Colonic mucosa (tissue), 4 donors: ENCODE measurements at regions of chr1 and their contacts with region 1.

Region 1: DNA sequence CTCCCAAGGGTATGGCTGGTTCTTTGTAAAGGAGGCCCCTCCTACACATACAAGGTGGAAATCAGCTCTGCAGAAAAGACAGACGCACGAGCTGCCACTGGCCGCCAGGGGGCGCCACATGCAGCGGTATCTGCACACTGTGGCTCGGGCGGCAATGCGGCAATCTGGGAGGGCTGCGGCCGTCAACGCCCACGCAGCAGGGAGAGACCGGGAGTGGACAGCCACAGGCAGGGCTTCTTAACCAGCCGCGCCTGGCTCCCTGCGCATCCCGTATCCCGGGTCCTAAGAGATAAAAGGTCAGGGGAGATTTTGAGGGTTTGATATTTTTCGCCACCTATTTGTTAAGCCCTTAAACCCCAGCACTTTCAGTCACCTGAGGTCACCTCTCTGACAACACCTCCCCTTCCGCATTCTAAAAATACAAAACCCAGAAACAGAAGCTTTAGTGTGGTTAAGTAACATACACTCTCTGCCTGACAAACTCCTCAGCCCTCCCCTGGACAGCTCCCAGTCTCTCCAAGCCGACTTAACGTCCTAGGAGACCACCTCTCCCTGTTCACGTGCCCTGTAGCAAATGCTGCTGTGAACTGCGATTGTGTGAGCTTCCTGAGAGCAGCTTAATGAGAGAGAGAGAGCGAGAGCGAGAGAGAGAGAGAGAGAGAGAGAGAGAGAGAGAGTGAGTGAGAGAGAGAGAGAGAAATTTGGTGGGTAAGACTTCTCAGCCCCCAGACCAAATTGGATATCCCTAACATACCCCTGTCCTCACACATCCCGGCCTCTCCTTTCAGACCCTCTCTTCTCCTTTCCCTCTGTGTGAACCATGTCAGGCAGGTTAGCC is 13.5 kb upstream of the KCNA2 start:
- DNase-seq: peak; percentile 78
- H3K4me3 ChIP-seq: peak overlapping the region; percentile 12
- H3K27ac ChIP-seq: no peak overlapping the region
- H3K4me1 ChIP-seq: no peaks in the 10 kb centered on the region
- H3K27me3 ChIP-seq: no peaks in the 10 kb centered on the region
- CTCF ChIP-seq: peak; percentile 88

Region 2: DNA sequence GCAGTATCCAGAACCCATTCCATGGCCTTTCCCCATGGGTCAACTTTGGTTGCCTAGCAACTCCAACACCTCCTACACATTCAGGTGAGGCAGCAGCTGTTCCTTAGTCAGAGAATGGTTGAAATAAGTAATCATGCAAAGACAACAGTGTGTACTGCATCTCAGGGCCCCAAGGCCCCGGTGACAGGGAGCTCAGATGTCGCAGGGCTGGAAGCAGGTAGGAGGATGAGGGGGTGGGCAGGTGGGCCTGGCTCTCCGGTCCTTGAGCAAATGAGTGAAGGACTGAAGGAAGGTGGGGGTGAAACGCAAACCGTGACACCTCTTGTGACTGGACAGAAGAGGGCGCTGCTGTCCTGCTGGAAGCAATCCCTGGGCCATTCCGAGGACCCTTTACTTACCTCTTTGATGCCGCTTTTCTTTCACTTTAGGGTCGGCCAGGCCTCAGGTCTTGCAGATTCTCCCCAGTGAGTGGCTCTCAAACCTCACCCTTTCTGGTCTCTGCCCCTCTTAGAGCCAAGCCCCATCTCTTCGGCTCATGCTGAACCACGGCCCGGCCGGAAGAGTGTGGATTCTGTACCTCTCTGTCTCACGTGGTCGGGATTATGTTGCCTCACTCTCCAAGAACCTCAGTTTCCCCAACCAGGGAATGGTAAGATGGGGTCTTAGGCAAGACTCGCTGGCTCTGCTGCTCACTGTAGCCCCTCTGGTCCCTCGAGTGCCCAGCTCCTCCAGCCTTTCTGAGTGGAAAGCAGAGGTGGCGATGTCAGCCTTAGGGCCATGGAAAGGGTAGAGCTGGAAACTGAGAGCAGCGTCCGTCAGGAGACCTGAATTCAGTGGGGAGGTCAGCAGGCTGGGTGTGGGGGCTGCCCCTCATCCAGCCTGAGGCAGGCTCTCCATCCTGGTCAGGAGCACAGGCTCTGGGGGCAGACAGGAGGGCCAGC is 95.0 kb before region 1 on chr1:
- intact Hi-C with region 1: loop called (anchors 5 kb)
- DNase-seq: peak; percentile 24
- H3K4me3 ChIP-seq: no peak overlapping the region
- H3K27ac ChIP-seq: no peak overlapping the region
- H3K4me1 ChIP-seq: no peaks in the 10 kb centered on the region
- H3K27me3 ChIP-seq: no peaks in the 10 kb centered on the region
- CTCF ChIP-seq: peak; percentile 60

Region 3: GRCh38 chr1:110554871-110555801 is 64.5 kb before region 1 on chr1:
- intact Hi-C with region 1: loop called (anchors 5 kb)
- DNase-seq: peak; percentile 19
- H3K4me3 ChIP-seq: peak overlapping the region; percentile 16
- H3K27ac ChIP-seq: no peak overlapping the region
- H3K4me1 ChIP-seq: no peaks in the 10 kb centered on the region
- H3K27me3 ChIP-seq: peaks cover 12% of the 10 kb centered on the region
- CTCF ChIP-seq: peak; percentile 63

Region 4: DNA sequence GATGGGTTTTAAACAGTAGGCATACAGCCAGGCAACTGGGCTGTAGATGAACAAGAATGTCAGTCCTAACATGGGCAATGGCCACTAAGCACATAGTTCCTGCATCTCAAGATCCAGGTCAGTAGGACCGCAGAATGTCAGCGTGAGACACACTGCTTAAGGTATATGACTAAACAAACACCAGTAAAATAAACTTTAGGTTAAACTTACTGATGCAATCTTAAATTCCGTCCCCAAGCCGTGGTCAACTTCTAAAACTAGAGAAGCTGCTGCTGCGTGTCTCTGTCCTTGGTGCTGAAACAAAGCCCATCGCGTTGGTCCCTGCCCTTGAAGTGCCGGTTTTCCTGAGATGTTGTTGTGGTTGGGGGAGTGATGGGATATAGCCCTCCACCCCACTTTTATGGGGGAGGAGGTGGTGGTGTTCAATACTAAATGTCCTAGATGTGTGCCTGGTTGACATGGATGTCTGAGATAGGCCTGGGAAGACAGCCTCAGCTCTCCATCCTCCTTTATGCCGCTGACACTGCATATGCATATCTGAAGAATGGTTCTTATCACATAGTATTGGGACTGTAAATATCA is 127.0 kb after region 1 on chr1:
- intact Hi-C with region 1: no loop called
- DNase-seq: peak; percentile 31
- H3K4me3 ChIP-seq: no peak overlapping the region
- H3K27ac ChIP-seq: no peak overlapping the region
- H3K4me1 ChIP-seq: no peaks in the 10 kb centered on the region
- H3K27me3 ChIP-seq: no peaks in the 10 kb centered on the region
- CTCF ChIP-seq: no peak

Region 5: DNA sequence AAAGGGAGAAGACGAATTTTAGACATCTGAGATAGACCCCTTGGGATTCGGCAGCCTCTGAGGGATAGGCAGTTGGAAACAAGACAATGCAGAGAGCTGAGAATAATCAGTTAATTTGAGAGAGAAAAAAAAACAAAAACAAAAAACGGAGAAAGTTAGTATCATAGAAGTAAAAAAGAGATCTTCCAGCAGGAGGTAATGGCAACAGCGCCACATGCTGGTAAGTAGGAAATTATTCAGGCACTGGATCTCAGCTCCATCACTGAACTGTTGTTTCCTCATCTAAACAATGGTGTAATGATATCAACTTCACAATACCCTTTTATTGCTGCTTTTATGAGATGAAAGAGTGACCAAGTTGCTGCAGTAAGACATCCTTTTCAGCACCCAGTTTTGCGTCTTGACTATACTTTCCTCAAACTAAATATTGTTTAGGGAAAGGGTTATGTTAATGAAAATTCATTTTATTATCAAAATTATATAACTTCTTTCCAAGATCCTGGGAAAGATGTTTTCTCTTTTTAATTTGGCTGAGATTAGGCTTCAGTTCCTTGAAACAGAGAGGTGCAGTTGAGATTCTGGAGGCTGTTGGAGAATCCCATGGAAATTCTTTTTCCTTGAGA is 146.5 kb after region 1 on chr1:
- intact Hi-C with region 1: loop called (anchors 5 kb)
- DNase-seq: peak; percentile 20
- H3K4me3 ChIP-seq: no peak overlapping the region
- H3K27ac ChIP-seq: no peak overlapping the region
- H3K4me1 ChIP-seq: no peaks in the 10 kb centered on the region
- H3K27me3 ChIP-seq: no peaks in the 10 kb centered on the region
- CTCF ChIP-seq: peak; percentile 63

Region 6: DNA sequence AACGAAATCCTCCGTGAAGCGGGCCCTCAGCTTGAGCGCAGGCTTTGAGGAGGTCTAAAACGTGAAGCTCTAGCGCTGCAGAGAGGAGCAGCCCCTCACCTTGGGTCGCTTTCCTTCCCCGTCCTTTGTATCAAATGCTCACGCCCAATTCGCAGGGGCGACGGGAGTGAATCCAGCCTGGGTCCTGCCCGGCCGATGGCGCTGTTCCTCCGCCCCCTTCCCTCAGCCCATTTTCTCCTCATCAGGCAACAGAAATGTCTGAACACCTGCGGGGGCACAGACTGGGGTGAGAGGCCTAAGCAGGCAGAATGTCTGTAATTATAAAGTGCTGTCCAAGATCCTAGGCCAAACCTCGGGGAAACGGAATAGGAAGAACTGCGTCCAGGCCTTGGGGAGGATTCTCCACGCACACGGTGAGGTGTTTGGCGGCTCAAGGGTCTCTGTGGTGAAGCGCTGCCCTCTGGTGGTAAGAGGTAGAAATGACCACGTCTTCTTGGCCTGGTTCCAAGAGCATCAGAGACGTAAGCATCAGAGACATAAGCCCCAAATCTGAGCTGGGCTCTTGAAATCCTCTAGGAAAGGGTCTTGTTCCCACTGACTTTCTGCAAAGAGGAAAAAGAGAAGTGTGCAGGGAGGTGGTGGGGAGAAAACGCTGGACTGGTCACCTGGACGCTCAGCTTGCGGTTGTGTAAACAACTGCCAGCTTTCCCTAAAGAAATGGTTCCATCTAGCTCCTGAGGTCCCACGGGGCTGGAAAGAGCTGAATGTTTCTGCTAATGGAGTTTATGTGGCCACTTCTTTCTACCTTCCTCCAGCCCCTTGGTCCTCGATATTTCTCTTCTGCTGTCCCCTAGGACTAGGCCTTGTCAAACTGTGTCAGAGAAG is 161.2 kb after region 1 on chr1:
- intact Hi-C with region 1: loop called (anchors 5 kb)
- DNase-seq: peak; percentile 69
- H3K4me3 ChIP-seq: no peak overlapping the region
- H3K27ac ChIP-seq: no peak overlapping the region
- H3K4me1 ChIP-seq: no peaks in the 10 kb centered on the region
- H3K27me3 ChIP-seq: no peaks in the 10 kb centered on the region
- CTCF ChIP-seq: peak; percentile 60

Region 7: DNA sequence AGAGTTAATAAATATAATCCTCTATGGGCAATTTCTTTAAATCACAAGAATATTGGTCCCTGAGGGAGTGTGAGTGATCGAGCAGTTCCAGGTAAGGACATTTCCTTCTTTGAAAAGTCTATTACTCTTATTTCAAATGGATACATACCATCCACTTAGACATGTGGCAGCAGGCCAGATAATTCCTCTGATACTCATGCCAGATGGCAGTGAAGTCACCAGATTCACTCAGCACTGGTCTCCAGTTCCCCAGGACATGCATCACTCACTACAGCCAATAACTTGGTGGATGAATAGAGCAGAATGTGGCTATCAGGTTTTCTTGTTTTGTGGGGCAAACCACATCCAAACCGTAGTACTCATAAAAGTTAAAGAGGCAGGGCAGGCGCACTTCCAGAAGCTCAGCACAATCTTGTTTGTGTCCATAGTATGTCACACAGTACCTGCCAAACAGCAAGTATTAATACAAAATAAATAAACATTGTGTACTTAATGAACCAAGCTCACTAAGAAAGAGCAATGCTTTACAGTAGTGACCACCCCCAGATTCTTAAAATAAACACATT is 179.1 kb after region 1 on chr1:
- intact Hi-C with region 1: no loop called
- DNase-seq: no peak
- H3K4me3 ChIP-seq: no peak overlapping the region
- H3K27ac ChIP-seq: no peak overlapping the region
- H3K4me1 ChIP-seq: no peaks in the 10 kb centered on the region
- H3K27me3 ChIP-seq: no peaks in the 10 kb centered on the region
- CTCF ChIP-seq: no peak